Calu3 (cell line): ENCODE measurements at regions of chr4 and their contacts with region 1.

Region 1: DNA sequence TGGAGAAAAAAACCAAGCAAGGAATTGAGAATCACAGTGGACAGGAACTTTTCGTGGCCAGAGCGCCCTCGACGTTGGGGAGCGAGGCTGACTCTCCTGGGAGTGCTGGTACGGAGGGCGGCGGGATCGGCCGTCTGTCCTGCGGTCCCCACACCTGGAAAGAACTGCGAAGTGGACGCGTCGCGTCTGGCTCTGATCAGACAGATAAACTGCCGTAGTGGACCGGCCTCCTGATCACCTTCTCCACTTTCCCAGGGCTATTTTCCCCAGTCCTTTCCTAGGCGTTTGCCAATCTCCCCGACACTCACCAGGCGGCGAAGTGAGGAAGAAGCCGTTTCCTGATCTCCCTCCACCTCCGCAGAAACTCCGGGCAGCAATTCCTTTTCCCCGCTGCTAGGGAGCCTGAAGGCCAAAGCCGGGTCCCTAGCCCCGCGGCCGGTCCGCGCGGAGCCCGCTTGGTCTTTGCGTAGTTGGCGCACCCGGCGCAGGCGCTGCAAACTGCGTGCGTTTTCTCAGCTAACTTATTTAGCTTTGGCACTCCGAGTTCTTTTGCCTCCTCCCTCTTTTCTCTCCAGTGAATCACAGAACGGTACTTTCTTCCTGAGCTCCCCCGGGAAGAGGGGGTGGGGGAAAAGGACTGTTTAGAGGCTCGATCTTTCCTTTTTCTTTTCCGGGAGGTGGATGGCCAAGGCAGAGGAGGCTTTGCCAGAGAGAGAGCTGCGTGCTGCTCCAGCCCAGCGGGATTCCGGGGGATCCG is at the start of gene ARSJ:
- DNase-seq: peak; percentile 37
- H3K4me3 Mint-ChIP-seq: peak within 1 kb of the TSS; percentile 76
- H3K27ac Mint-ChIP-seq: peak within 1 kb of the TSS; percentile 80
- H3K4me1 Mint-ChIP-seq: peaks cover 15% of the 10 kb centered on the region
- H3K27me3 Mint-ChIP-seq: no peaks in the 10 kb centered on the region
- CTCF ChIP-seq: no peak
- total RNA-seq, gene ARSJ: 12.5 and 13.3 TPM in 2 replicates

Region 2: GRCh38 chr4:114025176-114025777 is 46.0 kb after region 1 on chr4:
- CTCF ChIA-PET with region 1: no interaction called
- intact Hi-C with region 1: loop called (anchors 5 kb)
- DNase-seq: peak; percentile 32
- H3K4me3 Mint-ChIP-seq: no peak overlapping the region
- H3K27ac Mint-ChIP-seq: no peak overlapping the region
- H3K4me1 Mint-ChIP-seq: no peaks in the 10 kb centered on the region
- H3K27me3 Mint-ChIP-seq: no peaks in the 10 kb centered on the region
- CTCF ChIP-seq: no peak